ENCODE measurements at regions of chr7 and their contacts with region 1.

Region 1: DNA sequence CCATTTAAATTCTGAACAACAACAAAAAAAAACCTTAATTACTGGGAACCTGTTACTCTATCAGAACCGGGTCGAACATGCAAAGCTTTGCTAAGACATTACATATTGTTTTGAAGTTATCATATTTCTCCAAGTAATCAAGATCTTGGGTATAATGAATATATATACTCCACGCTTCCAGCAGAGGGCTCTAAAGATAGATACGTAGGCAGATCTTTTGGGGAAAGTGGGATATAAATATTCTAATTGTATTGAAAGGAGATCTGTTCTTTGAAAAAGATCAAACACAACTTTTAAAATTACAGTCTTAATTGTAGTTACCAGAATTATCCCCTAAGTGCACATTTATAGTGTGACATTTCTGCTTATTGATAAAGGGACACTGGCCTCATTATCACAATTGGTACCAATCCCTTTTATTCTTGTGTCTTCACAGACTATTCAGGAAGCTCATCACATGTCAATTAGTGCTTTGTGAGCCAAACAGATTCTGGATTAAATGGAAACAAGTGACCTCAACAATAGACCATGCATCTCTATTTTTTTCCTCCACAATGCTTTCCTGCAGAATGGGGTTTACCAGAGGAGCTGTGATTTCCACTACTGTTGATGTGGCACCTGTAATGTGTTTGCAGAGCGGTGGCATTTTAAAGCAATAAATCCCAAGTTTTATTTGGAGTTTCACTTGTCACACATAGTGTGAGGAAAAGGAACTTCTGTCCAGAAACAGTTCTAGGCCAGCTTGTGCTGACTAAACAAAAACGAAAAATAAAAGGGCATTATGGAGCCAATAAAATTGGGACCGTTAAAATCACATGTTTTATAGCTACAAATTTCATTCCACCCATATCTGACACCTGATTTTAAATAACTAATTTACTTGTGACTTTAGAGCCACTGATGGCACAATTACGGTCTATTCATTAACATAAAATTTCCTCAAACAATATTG is 122.4 kb downstream of the CTTNBP2 start:
- DNase-seq: no peak
- H3K4me3 ChIP-seq: no peak overlapping the region
- H3K27ac ChIP-seq: no peak overlapping the region
- H3K4me1 ChIP-seq: no peaks in the 10 kb centered on the region
- H3K27me3 ChIP-seq: no peaks in the 10 kb centered on the region
- CTCF ChIP-seq: peak; percentile 64

Region 2: DNA sequence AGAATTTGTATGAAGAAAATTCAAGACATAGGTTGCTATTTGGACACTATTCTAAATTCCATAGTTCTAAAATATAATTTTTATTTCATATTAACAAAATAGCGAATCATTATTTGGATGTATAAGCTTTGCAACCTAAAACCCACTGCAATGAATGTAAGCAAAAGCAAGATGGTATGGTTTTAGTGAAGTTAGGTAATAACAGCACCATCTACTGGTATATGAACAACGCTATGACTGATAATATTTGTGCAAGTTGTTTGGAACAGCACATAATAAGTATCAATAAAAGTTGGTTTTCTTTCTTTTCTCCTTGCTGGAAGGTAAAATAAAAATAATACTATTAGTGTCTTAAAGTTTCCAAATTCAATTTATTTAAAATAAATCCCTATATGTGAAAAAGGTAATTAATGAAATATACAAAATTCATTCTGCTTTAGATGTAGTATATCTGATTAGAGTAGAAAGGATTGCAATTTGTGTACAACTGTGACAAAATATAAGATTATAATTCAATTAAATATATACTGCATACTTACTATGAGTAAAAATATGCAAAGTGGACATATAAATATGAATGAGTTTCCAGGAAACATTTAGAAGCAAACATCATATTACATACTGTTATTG is 354.0 kb after region 1 on chr7:
- intact Hi-C with region 1: loop called (anchors 10 kb)
- DNase-seq: no peak
- H3K4me3 ChIP-seq: no peak overlapping the region
- H3K27ac ChIP-seq: no peak overlapping the region
- H3K4me1 ChIP-seq: no peaks in the 10 kb centered on the region
- H3K27me3 ChIP-seq: no peaks in the 10 kb centered on the region
- CTCF ChIP-seq: peak; percentile 64